ENCODE measurements at regions of chr21 and their contacts with region 1.

Region 1: DNA sequence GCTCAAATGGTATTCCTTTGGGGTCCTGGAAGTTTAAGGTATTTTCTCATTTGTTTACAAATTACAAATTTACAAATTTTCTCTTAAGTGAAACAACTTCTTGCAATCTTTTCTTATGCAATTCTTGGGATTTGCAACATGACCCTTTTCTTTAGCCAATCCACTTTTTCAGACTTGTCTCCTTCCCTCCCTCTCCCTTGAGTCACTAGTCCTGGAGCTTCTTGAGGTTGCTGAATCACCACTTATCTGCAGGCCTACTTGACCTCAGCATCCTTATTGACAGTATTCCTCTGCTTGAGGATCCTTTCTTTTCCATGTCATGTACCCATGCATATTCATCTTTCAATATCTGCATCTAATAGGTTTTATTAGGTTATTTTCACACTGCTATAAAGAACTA is 302.8 kb upstream of the ADAMTS5 start:
- DNase-seq: no peak
- H3K4me3 ChIP-seq: no peak overlapping the region
- H3K27ac ChIP-seq: peak overlapping the region in 1 of 2 donors; percentile 76
- H3K4me1 ChIP-seq: no peaks in the 10 kb centered on the region
- H3K27me3 ChIP-seq: no peaks in the 10 kb centered on the region
- CTCF ChIP-seq: no peak
- POLR2A ChIP-seq: no peak

Region 2: DNA sequence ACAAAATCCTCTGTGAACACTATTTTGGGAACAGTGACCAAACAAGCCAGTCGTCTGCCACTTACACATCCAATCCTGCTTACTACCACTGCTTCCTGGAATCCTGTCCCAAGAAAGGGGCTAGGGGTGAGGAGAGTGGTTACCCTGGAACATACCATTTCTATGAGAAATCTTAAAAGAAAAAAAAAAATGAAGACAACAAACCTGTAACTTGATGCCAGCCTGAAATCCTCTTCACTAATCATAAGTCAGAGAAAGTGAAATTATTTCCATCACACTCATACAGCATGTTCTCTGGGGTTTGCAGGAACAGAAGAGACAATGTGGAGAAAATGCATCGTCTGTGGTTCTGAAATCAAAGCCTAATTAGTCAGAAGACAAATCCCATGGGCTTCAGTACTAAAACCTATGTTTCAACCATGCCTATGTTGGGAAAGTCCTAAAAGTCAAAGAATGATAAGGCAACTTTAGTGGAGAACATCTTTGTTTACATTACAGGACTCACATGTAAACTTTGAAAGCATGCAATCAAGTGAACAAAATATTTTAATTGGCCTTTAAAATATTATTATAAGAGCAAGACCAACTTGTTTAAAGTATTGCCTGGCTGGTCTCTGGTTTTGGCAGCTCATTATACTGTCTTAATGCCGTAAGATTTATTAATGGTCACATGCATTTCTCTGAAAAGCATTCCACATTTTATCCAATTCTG is 1502.3 kb after region 1 on chr21:
- intact Hi-C with region 1: loop called (anchors 5 kb)
- DNase-seq: no peak
- H3K4me3 ChIP-seq: no peak overlapping the region
- H3K27ac ChIP-seq: no peak overlapping the region
- H3K4me1 ChIP-seq: no peaks in the 10 kb centered on the region
- H3K27me3 ChIP-seq: no peaks in the 10 kb centered on the region
- CTCF ChIP-seq: no peak
- POLR2A ChIP-seq: no peak

Measured in breast epithelium (tissue), 4 donors.